Naive thymus-derived CD4-positive, alpha-beta T cell (primary cell): ENCODE measurements at regions of chr13 and their contacts with region 1.

Region 1: DNA sequence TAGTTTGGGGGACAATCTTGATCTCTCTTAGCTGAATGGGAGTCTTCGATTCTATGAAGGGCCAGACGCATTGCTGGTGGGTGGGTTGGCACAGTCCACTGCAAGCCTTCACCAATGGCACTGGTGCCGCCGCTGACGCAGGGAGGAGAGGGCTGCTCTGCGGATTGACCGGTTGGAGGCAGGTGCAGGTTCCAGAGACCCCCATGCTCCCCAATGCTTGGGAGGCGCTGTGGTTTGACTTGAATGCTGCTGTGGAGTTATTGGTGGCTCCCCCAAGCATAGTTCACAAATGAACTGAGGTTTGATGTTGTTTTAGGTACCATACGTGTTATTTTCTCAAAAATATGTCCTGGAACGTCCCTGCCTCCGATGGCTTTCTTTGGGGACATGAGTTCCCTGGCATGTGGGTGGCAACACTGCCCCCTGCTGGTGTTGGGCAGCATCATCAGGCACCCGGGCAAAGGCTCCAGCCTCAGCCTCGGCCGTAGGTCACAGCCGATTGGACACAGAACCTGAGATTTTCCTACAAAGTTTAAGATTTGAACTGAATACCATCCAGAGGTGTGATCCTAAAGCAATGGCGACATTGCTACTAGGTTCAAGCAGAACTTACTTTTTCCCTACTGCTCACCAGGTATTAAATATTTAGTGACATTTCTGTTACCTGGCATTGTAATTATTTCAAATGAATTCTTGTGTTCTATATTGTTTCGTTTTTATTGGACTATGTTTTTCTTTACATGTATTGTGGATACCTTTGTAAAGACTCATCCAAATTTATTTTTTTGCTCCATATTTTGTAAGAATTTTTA is 95.5 kb downstream of the ANKRD10 start:
- DNase-seq: peak; percentile 39 to 78 (median 66)
- ATAC-seq: peak; percentile 95
- H3K4me3 ChIP-seq: no peak overlapping the region
- H3K4me3 Mint-ChIP-seq: peak overlapping the region in 3 of 10 donors; percentile 16 to 21 (median 19)
- H3K27ac ChIP-seq: no peak overlapping the region
- H3K27ac Mint-ChIP-seq: peak overlapping the region in 1 of 9 donors; percentile 72
- H3K4me1 ChIP-seq: no peaks in the 10 kb centered on the region
- H3K4me1 Mint-ChIP-seq: peaks cover 0 to 17% (median 14%) of the 10 kb centered on the region in 7 donors
- H3K27me3 ChIP-seq: no peaks in the 10 kb centered on the region
- H3K27me3 Mint-ChIP-seq: peaks cover 0 to 13% (median 0%) of the 10 kb centered on the region in 5 donors

Region 2: GRCh38 chr13:110644892-110645521 is 174.4 kb before region 1 on chr13:
- CTCF ChIA-PET with region 1: interaction called, 8 read pairs
- POLR2A ChIA-PET with region 1: interaction called, 4 read pairs
- intact Hi-C with region 1: loop called (anchors 1 kb)
- DNase-seq: peak in 8 of 9 donors; percentile 34 to 66 (median 48)
- ATAC-seq: peak; percentile 95
- H3K4me3 ChIP-seq: no peak overlapping the region
- H3K4me3 Mint-ChIP-seq: no peak overlapping the region
- H3K27ac ChIP-seq: no peak overlapping the region
- H3K27ac Mint-ChIP-seq: peak overlapping the region in 4 of 9 donors; percentile 25 to 65 (median 32)
- H3K4me1 ChIP-seq: no peaks in the 10 kb centered on the region
- H3K4me1 Mint-ChIP-seq: peaks cover 0 to 6% (median 0%) of the 10 kb centered on the region in 7 donors
- H3K27me3 ChIP-seq: no peaks in the 10 kb centered on the region
- H3K27me3 Mint-ChIP-seq: no peaks in the 10 kb centered on the region

Region 3: GRCh38 chr13:110680851-110681250 is 138.6 kb before region 1 on chr13:
- CTCF ChIA-PET with region 1: interaction called, 23 read pairs
- POLR2A ChIA-PET with region 1: no interaction called
- intact Hi-C with region 1: loop called (anchors 1 kb)
- DNase-seq: peak in 3 of 9 donors; percentile 8 to 22 (median 21)
- ATAC-seq: no peak
- H3K4me3 ChIP-seq: no peak overlapping the region
- H3K4me3 Mint-ChIP-seq: no peak overlapping the region
- H3K27ac ChIP-seq: no peak overlapping the region
- H3K27ac Mint-ChIP-seq: no peak overlapping the region
- H3K4me1 ChIP-seq: no peaks in the 10 kb centered on the region
- H3K4me1 Mint-ChIP-seq: peaks cover 4 to 22% (median 12%) of the 10 kb centered on the region in 7 donors
- H3K27me3 ChIP-seq: no peaks in the 10 kb centered on the region
- H3K27me3 Mint-ChIP-seq: no peaks in the 10 kb centered on the region

Region 4: GRCh38 chr13:110726726-110727125 is 92.7 kb before region 1 on chr13:
- CTCF ChIA-PET with region 1: no interaction called
- POLR2A ChIA-PET with region 1: no interaction called
- intact Hi-C with region 1: no loop called
- DNase-seq: peak in 7 of 9 donors; percentile 11 to 55 (median 19)
- ATAC-seq: peak; percentile 86
- H3K4me3 ChIP-seq: no peak overlapping the region
- H3K4me3 Mint-ChIP-seq: peak overlapping the region; percentile 14 to 72 (median 56)
- H3K27ac ChIP-seq: peak overlapping the region; percentile 44
- H3K27ac Mint-ChIP-seq: peak overlapping the region; percentile 5 to 93 (median 81)
- H3K4me1 ChIP-seq: peaks cover 0 to 17% of the 10 kb centered on the region in 2 donors
- H3K4me1 Mint-ChIP-seq: peaks cover 21 to 43% (median 35%) of the 10 kb centered on the region in 7 donors
- H3K27me3 ChIP-seq: no peaks in the 10 kb centered on the region
- H3K27me3 Mint-ChIP-seq: no peaks in the 10 kb centered on the region